MCF 10A (cell line): ENCODE measurements at regions of chr4 and their contacts with region 1.

Region 1: GRCh38 chr4:82428969-82429727 is 1.1 kb downstream of the HNRNPDL start:
- DNase-seq: peak; percentile 92
- H3K4me3 Mint-ChIP-seq: peak overlapping the region; percentile 98
- H3K27ac Mint-ChIP-seq: peak overlapping the region; percentile 99
- H3K4me1 Mint-ChIP-seq: peaks cover 20% of the 10 kb centered on the region
- H3K27me3 Mint-ChIP-seq: no peaks in the 10 kb centered on the region
- CTCF ChIP-seq: peak; percentile 96

Region 2: DNA sequence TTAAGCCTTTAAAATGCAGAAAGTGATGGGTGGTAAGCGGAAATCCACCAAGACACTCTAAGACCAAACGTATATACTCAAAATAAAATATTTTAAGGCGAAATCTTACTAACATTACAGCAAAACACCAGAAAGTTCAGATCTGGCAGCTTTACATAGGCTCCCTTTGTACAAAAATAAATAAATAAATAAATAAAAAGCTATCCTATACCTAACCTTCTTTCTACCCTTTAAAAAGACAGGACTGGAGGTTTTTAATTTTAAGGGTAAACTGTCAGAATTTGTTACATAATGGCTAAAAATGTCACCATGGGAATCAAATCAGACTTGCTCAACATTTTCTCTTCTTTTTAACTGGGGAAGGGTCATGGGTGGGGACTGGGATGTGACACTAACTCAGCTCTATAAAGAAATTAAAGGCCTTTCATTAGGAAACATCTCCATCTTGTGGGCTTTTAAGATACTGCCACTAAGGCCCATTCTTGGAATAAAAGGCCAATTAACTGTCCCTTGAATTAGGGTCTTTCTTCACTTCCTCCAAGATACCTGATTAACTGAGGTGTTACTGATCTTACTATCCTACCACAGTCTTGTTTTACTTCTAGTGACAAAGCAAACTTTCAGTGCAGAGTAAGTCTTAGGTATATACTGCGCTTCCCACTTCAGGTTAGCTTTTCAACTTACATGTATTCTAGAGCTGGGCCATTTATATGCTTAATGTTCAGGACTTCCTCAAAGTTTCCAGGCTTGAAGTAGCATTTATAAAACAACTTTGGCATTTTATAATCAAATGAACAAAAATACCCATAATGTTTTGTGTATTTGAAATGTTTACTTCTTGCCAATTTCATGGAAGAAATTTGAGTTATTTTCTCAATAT is 68.6 kb before region 1 on chr4:
- CTCF ChIA-PET with region 1: interaction called, 5 read pairs
- POLR2A ChIA-PET with region 1: interaction called, 10 read pairs
- intact Hi-C with region 1: no loop called
- DNase-seq: peak; percentile 49
- H3K4me3 Mint-ChIP-seq: no peak overlapping the region
- H3K27ac Mint-ChIP-seq: no peak overlapping the region
- H3K4me1 Mint-ChIP-seq: peaks cover 32% of the 10 kb centered on the region
- H3K27me3 Mint-ChIP-seq: no peaks in the 10 kb centered on the region
- CTCF ChIP-seq: peak; percentile 48

Region 3: GRCh38 chr4:82379964-82380733 is 49.0 kb before region 1 on chr4:
- CTCF ChIA-PET with region 1: interaction called, 38 read pairs
- POLR2A ChIA-PET with region 1: interaction called, 240 read pairs
- intact Hi-C with region 1: no loop called
- DNase-seq: peak; percentile 97
- H3K4me3 Mint-ChIP-seq: peak overlapping the region; percentile 43
- H3K27ac Mint-ChIP-seq: peak overlapping the region; percentile 3
- H3K4me1 Mint-ChIP-seq: peaks cover 27% of the 10 kb centered on the region
- H3K27me3 Mint-ChIP-seq: no peaks in the 10 kb centered on the region
- CTCF ChIP-seq: peak; percentile 25

Region 4: GRCh38 chr4:82415922-82416365 is 13.2 kb before region 1 on chr4:
- CTCF ChIA-PET with region 1: interaction called, 5 read pairs
- POLR2A ChIA-PET with region 1: interaction called, 24 read pairs
- intact Hi-C with region 1: no loop called
- DNase-seq: no peak
- H3K4me3 Mint-ChIP-seq: no peak overlapping the region
- H3K27ac Mint-ChIP-seq: no peak overlapping the region
- H3K4me1 Mint-ChIP-seq: no peaks in the 10 kb centered on the region
- H3K27me3 Mint-ChIP-seq: no peaks in the 10 kb centered on the region
- CTCF ChIP-seq: no peak

Region 5: DNA sequence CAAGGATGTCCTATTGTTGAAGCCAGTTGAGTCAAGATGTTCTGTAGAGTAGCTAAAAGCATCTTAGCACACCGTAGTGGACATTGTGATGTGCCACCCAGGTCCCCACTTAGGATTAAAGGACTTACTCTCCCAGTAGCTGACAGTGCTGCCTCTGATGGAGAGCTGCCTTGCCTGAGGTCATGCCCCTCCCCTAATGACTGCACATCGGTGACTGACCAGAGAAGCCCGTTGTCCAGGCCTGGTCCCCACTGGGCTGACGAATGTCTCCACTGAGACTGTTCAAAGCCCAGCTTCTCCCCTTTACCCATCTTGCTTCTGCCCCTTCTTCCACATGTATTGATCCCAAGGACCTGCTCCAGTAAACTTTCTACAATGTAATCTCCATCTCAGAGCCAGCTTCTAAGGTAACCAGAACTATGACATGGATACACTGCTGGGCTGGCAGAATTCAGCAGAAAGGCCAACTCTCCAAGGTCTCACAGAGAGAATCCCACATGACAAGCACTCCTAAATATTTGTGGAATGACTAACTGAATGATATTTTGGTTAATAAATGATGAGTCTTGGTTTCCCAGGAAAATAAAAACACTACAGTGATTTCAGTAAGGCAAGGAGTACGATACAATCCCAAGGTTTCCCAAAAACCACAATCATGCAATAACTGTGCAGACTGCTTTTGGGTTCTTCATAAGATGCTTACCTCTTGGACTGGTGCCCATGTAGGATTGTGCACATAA is 215.0 kb after region 1 on chr4:
- CTCF ChIA-PET with region 1: no interaction called
- POLR2A ChIA-PET with region 1: no interaction called
- intact Hi-C with region 1: no loop called
- DNase-seq: peak; percentile 9
- H3K4me3 Mint-ChIP-seq: no peak overlapping the region
- H3K27ac Mint-ChIP-seq: no peak overlapping the region
- H3K4me1 Mint-ChIP-seq: peaks cover 5% of the 10 kb centered on the region
- H3K27me3 Mint-ChIP-seq: no peaks in the 10 kb centered on the region
- CTCF ChIP-seq: no peak

Region 6: DNA sequence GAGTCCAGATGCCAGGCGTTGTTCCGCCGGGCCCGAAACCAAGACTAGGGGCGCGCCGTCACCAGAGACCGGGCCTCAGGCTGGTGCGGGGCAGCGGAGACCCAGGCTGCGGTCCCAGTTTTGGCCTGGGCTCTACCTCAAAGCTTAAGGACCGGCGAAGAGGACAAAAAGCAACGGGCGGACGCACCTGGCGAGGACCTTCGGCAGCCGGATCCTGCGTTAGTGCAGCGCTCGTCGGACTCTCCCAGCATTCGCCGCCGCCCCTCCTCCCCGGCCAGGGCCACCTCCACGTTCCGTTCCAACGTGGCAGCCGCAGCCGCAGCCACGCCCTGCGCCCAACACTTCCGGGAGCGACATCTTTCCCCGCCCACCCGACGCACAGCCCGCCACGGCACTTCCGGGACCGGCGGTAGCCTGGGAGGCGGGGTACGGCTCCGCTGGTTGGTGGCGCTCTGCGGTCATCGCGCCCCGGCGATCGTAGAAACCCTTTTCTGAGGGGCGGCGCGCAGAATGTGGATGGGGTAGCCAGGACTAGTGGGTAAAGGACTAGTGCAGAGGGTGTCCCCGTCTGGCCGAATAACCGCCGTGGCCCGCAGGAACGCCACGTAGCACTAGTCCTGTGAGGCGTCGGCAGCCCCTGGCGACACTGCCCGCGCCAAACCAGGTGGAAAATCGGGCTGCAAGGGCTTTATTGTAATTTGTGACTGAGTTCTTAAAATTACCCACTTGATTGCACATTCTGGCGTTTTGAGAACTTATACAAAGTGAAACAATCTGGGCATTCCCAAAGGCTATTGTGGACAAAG is 462.0 kb after region 1 on chr4 and contains the start of gene SEC31A:
- CTCF ChIA-PET with region 1: interaction called, 3 read pairs
- POLR2A ChIA-PET with region 1: interaction called, 18 read pairs
- intact Hi-C with region 1: no loop called
- DNase-seq: peak; percentile 95
- H3K4me3 Mint-ChIP-seq: peak within 1 kb of the TSS; percentile 86
- H3K27ac Mint-ChIP-seq: peak within 1 kb of the TSS; percentile 98
- H3K4me1 Mint-ChIP-seq: peaks cover 24% of the 10 kb centered on the region
- H3K27me3 Mint-ChIP-seq: no peaks in the 10 kb centered on the region
- CTCF ChIP-seq: no peak
- total RNA-seq, gene SEC31A: 212 and 229 TPM in 2 replicates

Region 7: GRCh38 chr4:82989575-82990429 is 560.7 kb after region 1 on chr4:
- CTCF ChIA-PET with region 1: no interaction called
- POLR2A ChIA-PET with region 1: no interaction called
- intact Hi-C with region 1: no loop called
- DNase-seq: peak; percentile 2
- H3K4me3 Mint-ChIP-seq: no peak overlapping the region
- H3K27ac Mint-ChIP-seq: peak overlapping the region; percentile 52
- H3K4me1 Mint-ChIP-seq: peaks cover 11% of the 10 kb centered on the region
- H3K27me3 Mint-ChIP-seq: no peaks in the 10 kb centered on the region
- CTCF ChIP-seq: no peak